ENCODE measurements at regions of chr13 and their contacts with region 1.

Region 1: DNA sequence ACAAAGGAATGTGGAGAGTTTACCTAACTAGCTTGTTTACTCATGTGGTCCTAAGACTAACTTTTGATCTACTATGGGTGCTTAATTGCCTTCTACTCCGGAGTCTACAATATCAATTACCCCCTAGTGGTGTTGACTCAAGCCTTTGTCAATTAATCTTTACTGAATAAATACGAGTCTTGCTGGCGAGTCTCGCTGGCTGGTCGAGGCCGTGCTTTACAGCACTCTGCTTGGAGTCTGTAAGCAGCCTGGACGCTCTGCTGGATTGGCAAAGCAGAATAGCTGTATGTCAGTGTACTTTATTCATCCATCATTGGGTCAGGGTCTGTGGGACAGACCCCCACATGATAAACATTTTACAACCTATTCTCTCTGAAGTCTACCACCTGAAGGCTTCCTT is 9.9 kb upstream of the SPART start:
- DNase-seq: no peak

Region 2: GRCh38 chr13:36369268-36370107 is 13.4 kb after region 1 on chr13:
- intact Hi-C with region 1: loop called in 1 of 2 experiments (anchors 1 kb)
- DNase-seq: no peak

Region 3: GRCh38 chr13:36418022-36418805 is 62.2 kb after region 1 on chr13:
- intact Hi-C with region 1: no loop called
- DNase-seq: no peak

Measured in posterior vena cava (tissue), 2 donors.